AG04449 (cell line): ENCODE measurements at regions of chr14 and their contacts with region 1.

Region 1: GRCh38 chr14:80862983-80863382 is 78.6 kb downstream of the CEP128 start:
- DNase-seq: no peak
- H3K4me3 ChIP-seq: no peak overlapping the region
- CTCF ChIP-seq: no peak

Region 2: DNA sequence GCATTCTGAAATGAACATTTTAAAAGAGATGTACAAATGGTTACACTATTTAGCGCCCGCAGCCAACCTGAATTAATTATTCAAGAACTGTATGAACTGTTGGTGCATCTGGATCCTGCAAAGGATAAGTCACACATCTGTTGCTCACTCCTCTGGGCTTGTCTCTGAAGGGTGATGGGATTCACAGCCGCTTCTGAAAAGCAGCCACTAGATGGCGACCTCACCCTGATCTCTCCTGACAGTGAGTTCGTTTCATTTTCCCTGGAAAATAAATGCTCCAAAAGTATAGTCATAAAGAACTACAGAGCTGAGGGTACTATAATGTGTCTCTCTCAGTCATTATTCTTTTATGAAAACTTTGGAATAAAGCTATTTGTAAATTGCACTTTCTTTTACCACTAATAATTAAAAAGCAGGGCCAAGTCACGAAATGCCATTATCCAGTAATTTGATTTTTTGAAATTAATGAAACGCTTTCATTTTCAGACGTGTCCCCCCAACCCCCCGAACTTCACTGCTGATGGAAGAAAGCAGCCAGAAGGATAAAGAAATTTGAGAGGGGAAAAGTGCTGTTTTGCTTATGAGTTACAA is 1903.2 kb before region 1 on chr14:
- CTCF ChIA-PET with region 1: interaction called, 27 read pairs
- POLR2A ChIA-PET with region 1: no interaction called
- DNase-seq: peak; percentile 37
- H3K4me3 ChIP-seq: no peak overlapping the region
- CTCF ChIP-seq: peak; percentile 82

Region 3: DNA sequence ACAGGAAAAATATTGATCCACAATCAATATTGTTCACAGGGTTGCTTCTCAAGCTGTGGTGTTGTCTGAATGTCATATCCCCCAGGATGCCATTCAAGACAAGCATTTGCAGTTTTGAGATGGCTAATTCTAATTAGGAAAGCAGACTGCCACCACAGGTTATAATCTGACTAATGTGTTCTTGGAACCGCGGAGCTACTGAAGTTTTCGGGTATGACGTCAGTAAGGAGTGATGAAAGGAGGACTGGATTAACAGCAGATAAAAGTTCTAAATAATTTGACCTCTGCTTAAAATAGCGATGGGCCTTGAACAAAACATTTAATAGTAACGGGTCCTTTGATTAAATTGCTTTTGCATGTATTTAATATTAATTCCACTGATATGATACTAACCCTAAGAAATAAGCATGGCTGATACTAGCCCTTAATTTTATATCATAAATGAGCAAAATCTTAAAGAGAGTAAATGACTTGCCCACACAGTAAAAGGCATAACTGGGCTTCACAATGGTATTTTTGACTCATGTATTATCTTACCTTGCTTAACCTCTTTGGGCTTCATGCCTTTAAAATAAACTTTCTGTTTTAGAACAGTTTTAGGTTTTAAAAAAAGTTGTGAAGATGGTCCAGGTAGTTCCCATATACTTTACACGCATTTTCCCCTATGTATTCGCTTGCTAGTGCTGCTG is 142.7 kb after region 1 on chr14:
- CTCF ChIA-PET with region 1: no interaction called
- POLR2A ChIA-PET with region 1: no interaction called
- DNase-seq: no peak
- H3K4me3 ChIP-seq: no peak overlapping the region
- CTCF ChIP-seq: no peak